ENCODE measurements at regions of chr7 and their contacts with region 1.

Region 1: DNA sequence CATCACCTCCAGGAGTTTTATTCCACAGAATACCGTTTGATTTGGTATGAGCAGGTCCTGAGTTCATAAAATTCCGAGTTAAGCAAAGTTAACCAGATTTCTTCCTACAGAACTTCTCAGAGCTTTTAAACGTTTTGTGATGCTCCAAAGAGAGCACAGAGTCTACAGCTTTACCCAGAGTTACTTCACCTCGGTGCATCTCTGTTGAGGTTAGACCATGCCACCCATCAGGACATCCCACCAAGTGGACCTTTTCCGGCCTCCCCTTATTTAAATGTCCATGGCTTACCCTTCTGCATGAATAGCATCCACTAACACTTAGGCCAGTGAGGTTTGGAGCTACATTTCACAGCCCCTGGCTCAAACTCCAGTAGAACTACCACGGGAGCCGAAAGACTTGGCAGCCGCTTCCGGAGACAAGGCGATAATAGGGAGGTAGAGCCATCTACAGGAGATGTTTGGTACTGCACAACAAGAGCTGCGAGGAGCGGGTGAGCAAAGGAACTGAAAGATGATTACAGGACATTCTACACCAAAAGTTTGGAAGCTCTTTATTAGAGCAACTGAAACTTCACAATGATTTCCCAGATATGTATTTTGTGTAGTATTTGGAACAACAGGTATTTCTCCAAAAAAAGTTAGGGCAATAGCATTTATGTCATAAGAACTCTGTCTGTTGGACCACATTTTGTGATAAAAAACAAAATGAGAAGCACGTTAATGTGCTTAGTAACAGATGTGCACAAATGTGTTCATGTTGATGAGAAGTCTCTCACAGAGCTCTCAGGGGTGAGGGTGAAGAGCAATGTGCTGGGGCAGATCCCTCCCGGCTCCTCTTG is 174.7 kb downstream of the HERPUD2 start:
- DNase-seq: peak; percentile 73
- ATAC-seq: peak; percentile 72
- H3K4me3 Mint-ChIP-seq: no peak overlapping the region
- H3K27ac Mint-ChIP-seq: no peak overlapping the region
- H3K4me1 Mint-ChIP-seq: no peaks in the 10 kb centered on the region
- H3K27me3 Mint-ChIP-seq: peaks cover 12% of the 10 kb centered on the region

Region 2: GRCh38 chr7:35424869-35425495 is 95.2 kb before region 1 on chr7:
- CTCF ChIA-PET with region 1: interaction called, 27 read pairs
- POLR2A ChIA-PET with region 1: no interaction called
- intact Hi-C with region 1: loop called (anchors 1 kb)
- DNase-seq: peak; percentile 75
- ATAC-seq: peak; percentile 74
- H3K4me3 Mint-ChIP-seq: no peak overlapping the region
- H3K27ac Mint-ChIP-seq: no peak overlapping the region
- H3K4me1 Mint-ChIP-seq: peaks cover 5% of the 10 kb centered on the region
- H3K27me3 Mint-ChIP-seq: peaks cover 3% of the 10 kb centered on the region

Region 3: DNA sequence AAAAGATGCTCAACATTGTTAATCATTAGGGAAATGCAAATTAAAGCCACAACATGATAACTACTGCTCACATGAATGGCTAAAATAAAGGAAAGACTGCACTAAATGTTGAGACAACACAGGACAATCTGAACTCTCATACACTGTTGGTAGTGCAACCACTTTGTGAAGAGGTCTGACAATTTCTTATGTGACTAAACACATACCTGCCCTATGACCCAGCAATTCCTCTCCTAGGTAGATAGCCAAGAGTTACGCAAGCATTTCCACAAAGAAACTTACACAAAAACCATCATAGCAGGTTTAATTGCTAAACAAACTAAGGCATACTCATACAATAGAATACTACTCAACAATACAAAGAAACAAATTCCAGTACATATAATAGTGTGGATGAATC is 216.5 kb after region 1 on chr7:
- CTCF ChIA-PET with region 1: no interaction called
- POLR2A ChIA-PET with region 1: no interaction called
- intact Hi-C with region 1: no loop called
- DNase-seq: no peak
- ATAC-seq: no peak
- H3K4me3 Mint-ChIP-seq: no peak overlapping the region
- H3K27ac Mint-ChIP-seq: no peak overlapping the region
- H3K4me1 Mint-ChIP-seq: peaks cover 3% of the 10 kb centered on the region
- H3K27me3 Mint-ChIP-seq: no peaks in the 10 kb centered on the region